GM12878 (cell line): ENCODE measurements at regions of chr11 and their contacts with region 1.

Region 1: GRCh38 chr11:35822815-35823495 is 120.9 kb upstream of the LDLRAD3 start:
- DNase-seq: no peak
- ATAC-seq: no peak
- H3K4me3 ChIP-seq: no peak overlapping the region
- H3K27ac ChIP-seq: no peak overlapping the region
- H3K4me1 ChIP-seq: no peaks in the 10 kb centered on the region
- H3K27me3 ChIP-seq: no peaks in the 10 kb centered on the region
- CTCF ChIP-seq: no peak
- EP300 ChIP-seq: no peak
- POLR2A ChIP-seq: no peak
- RAD21 ChIP-seq: no peak

Region 2: GRCh38 chr11:35617687-35618496 is 205.1 kb before region 1 on chr11 and contains the start of gene FJX1:
- CTCF ChIA-PET with region 1: interaction called, 48 read pairs
- POLR2A ChIA-PET with region 1: interaction called, 3 read pairs
- RAD21 ChIA-PET with region 1: interaction called, 41 read pairs
- SMC1A ChIA-PET with region 1: interaction called, 14 read pairs
- in situ Hi-C with region 1: loop called (anchors 5 kb)
- intact Hi-C with region 1: loop called (anchors 1 kb)
- DNase-seq: no peak
- ATAC-seq: peak; percentile 36
- H3K4me3 ChIP-seq: peak within 1 kb of the TSS; percentile 56
- H3K27ac ChIP-seq: no peak within 1 kb of the TSS; the same call in 1 of the 2 replicates
- H3K4me1 ChIP-seq: peaks cover 8% of the 10 kb centered on the region; the same call in 1 of the 2 replicates
- H3K27me3 ChIP-seq: no peaks in the 10 kb centered on the region; a peak in 2 of 4 replicates
- CTCF ChIP-seq: no peak
- EP300 ChIP-seq: no peak
- POLR2A ChIP-seq: no peak
- RAD21 ChIP-seq: no peak
- polyA plus RNA-seq, gene FJX1: 4.2 to 10.6 TPM

Region 3: GRCh38 chr11:35794850-35795249 is 28.1 kb before region 1 on chr11:
- CTCF ChIA-PET with region 1: interaction called, 28 read pairs
- POLR2A ChIA-PET with region 1: no interaction called
- RAD21 ChIA-PET with region 1: interaction called, 6 read pairs
- SMC1A ChIA-PET with region 1: interaction called, 14 read pairs
- in situ Hi-C with region 1: no loop called
- intact Hi-C with region 1: no loop called
- DNase-seq: no peak
- ATAC-seq: no peak
- H3K4me3 ChIP-seq: no peak overlapping the region
- H3K27ac ChIP-seq: no peak overlapping the region
- H3K4me1 ChIP-seq: peaks cover 5% of the 10 kb centered on the region; the same call in 1 of the 2 replicates
- H3K27me3 ChIP-seq: no peaks in the 10 kb centered on the region
- CTCF ChIP-seq: no peak
- EP300 ChIP-seq: no peak
- POLR2A ChIP-seq: no peak
- RAD21 ChIP-seq: no peak

Region 4: DNA sequence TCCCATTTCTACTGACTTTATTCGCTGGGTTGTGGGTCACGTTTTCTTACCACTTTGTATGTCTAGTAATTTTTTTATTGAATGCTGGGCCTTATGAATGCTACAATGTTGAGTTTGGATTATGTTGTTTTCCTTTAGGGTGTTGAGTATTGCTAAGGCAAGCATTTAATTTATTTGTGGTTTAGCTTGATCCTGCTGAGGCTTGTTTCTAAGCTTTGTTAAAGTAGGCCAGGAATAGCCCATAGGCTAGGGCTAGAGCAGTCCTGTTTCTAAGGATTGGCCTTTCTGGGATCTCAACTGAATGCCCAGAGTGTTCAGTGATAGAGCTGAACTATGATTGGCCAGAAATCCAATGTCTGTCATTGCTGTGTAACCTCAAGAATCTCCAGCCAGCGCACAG is 64.8 kb after region 1 on chr11:
- CTCF ChIA-PET with region 1: interaction called, 11 read pairs
- POLR2A ChIA-PET with region 1: no interaction called
- RAD21 ChIA-PET with region 1: interaction called, 3 read pairs
- SMC1A ChIA-PET with region 1: no interaction called
- in situ Hi-C with region 1: no loop called
- intact Hi-C with region 1: no loop called
- DNase-seq: no peak
- ATAC-seq: no peak
- H3K4me3 ChIP-seq: no peak overlapping the region
- H3K27ac ChIP-seq: no peak overlapping the region
- H3K4me1 ChIP-seq: no peaks in the 10 kb centered on the region
- H3K27me3 ChIP-seq: no peaks in the 10 kb centered on the region
- CTCF ChIP-seq: no peak
- EP300 ChIP-seq: no peak
- POLR2A ChIP-seq: no peak
- RAD21 ChIP-seq: no peak

Region 5: GRCh38 chr11:36023922-36024321 is 201.0 kb after region 1 on chr11:
- CTCF ChIA-PET with region 1: interaction called, 10 read pairs
- POLR2A ChIA-PET with region 1: no interaction called
- RAD21 ChIA-PET with region 1: interaction called, 6 read pairs
- SMC1A ChIA-PET with region 1: interaction called, 10 read pairs
- in situ Hi-C with region 1: no loop called
- intact Hi-C with region 1: no loop called
- DNase-seq: no peak
- ATAC-seq: no peak
- H3K4me3 ChIP-seq: no peak overlapping the region
- H3K27ac ChIP-seq: no peak overlapping the region
- H3K4me1 ChIP-seq: no peaks in the 10 kb centered on the region
- H3K27me3 ChIP-seq: no peaks in the 10 kb centered on the region; a peak in 1 of 4 replicates
- CTCF ChIP-seq: no peak
- EP300 ChIP-seq: no peak
- POLR2A ChIP-seq: no peak
- RAD21 ChIP-seq: no peak

Region 6: DNA sequence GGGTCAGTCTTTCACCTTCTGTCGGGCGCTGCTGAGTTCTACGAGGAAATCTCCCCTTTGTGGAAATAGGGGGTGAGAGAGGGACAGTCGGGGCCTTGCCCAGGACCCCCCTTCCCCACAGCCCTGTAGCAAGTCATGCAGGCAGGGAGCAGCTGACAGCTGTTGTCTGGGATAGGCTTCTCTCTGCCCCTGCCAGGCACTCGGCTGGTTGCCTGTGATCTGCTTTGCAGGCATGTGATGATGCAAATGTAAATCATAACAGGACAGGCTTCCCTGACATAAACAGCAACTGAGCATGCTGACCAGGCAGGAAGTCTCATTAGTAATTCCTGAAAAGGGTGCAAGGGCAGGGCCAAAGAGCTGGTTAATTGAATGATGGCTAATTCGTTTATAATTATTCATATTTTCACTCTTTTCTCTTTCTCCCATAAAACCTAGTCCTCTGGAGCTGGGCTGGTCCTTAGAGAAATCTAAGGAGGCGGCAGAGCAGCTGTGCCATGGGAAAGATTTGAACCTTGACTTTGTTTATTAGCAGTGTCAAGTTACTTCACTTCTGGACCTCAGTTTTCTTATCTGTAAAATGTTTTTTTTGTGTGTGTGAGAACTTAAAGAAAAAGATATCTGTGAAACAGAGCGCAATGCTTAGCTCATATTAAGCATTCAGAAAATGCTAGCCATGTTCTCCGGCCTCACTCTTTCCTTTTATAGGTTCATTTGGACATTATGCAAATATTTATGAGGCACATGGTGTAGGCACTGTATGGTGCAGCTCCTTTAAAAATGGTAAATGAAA is 250.7 kb after region 1 on chr11:
- CTCF ChIA-PET with region 1: interaction called, 43 read pairs
- POLR2A ChIA-PET with region 1: no interaction called
- RAD21 ChIA-PET with region 1: interaction called, 24 read pairs
- SMC1A ChIA-PET with region 1: interaction called, 31 read pairs
- in situ Hi-C with region 1: no loop called
- intact Hi-C with region 1: loop called (anchors 5 kb)
- DNase-seq: no peak
- ATAC-seq: peak; percentile 41
- H3K4me3 ChIP-seq: no peak overlapping the region
- H3K27ac ChIP-seq: no peak overlapping the region
- H3K4me1 ChIP-seq: no peaks in the 10 kb centered on the region; the same call in 1 of the 2 replicates
- H3K27me3 ChIP-seq: no peaks in the 10 kb centered on the region
- CTCF ChIP-seq: no peak
- EP300 ChIP-seq: no peak
- POLR2A ChIP-seq: no peak
- RAD21 ChIP-seq: no peak

Region 7: GRCh38 chr11:36149538-36150242 is 326.7 kb after region 1 on chr11:
- CTCF ChIA-PET with region 1: interaction called, 18 read pairs
- POLR2A ChIA-PET with region 1: no interaction called
- RAD21 ChIA-PET with region 1: interaction called, 11 read pairs
- SMC1A ChIA-PET with region 1: interaction called, 4 read pairs
- in situ Hi-C with region 1: no loop called
- intact Hi-C with region 1: loop called (anchors 5 kb)
- DNase-seq: peak; percentile 31
- ATAC-seq: peak; percentile 90
- H3K4me3 ChIP-seq: no peak overlapping the region
- H3K27ac ChIP-seq: no peak overlapping the region
- H3K4me1 ChIP-seq: no peaks in the 10 kb centered on the region
- H3K27me3 ChIP-seq: no peaks in the 10 kb centered on the region
- CTCF ChIP-seq: peak; percentile 48 to 62 (median 61); a peak in 5 of 6 replicates
- EP300 ChIP-seq: peak; percentile 36 to 43; a peak in 1 of 4 replicates
- POLR2A ChIP-seq: no peak
- RAD21 ChIP-seq: peak; percentile 72

Region 8: DNA sequence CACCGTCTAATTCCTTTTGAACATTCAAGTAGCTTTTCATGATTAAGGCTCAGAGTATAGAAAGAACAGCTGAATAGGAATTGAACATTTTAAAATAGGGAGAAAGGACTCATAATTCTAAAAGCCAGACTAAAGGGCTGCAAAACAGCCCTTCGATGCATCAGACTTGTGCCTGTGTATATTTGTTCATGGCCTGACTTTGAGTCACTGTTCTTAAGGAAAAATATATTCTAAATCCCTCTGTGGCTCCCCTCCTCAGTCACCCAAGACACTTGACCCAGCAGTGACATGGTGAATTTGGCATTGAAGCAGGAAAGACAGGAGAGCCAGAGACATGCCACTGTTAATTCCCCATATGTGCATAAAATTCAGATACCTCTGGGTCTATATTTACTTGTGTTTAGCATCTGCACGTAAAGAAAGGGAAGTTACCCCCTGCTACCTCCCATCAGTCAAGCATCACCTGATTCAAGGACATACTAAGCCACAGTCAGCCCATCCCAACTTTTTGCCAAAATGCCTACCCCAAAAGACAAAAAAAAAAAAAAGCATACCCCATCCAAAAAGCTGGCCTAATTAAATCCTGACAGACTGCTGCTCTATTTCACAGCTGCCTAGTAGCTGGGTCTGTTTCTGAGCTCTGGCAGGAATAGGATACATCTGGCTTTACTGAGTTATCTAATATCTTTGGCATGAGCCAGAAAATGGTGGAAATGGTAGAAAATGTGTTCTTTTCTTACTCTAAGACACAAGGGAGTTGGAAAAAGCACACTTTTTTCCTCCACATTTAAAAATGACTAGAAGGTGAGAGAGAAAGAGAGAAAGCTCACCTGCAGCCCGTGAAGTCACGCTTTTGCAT is 372.8 kb after region 1 on chr11:
- CTCF ChIA-PET with region 1: no interaction called
- POLR2A ChIA-PET with region 1: no interaction called
- RAD21 ChIA-PET with region 1: no interaction called
- SMC1A ChIA-PET with region 1: no interaction called
- in situ Hi-C with region 1: no loop called
- intact Hi-C with region 1: no loop called
- DNase-seq: no peak
- ATAC-seq: no peak
- H3K4me3 ChIP-seq: no peak overlapping the region
- H3K27ac ChIP-seq: no peak overlapping the region
- H3K4me1 ChIP-seq: no peaks in the 10 kb centered on the region
- H3K27me3 ChIP-seq: no peaks in the 10 kb centered on the region
- CTCF ChIP-seq: no peak
- EP300 ChIP-seq: no peak
- POLR2A ChIP-seq: no peak
- RAD21 ChIP-seq: no peak